ENCODE measurements at regions of chr15 and their contacts with region 1.

Region 1: DNA sequence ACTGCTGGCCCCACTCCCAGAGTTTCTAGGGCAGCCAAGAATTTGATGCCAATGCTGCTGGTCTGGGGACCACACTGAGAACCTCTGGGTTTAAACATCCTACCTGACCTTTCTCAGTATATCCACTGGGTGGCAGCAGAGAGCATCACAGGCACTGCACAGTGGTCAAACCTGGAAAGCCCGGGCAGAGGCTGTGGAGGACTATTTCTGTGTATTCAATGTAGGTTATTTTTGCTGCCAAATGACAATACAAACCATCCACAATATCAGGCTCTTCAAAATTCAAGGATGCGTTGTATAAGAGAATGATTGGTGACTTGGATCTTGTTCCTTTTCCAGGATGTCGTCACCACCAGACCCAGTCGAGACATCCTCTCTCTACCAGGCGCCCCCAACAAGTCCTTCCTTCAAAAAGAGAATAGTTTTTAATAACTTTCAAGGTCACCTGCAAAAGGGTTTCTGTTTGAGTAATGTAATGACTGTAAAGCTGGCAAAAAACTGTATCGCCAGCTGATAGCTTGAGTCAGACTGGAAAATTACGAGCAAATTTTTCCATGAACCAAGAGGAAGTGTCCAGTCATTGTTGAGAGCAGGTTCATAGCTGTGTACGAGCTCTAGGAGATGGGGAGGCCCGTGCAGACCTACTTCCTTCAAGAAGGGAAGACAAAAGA is 30.5 kb upstream of the MYZAP start:
- DNase-seq: peak; percentile 36
- H3K4me3 Mint-ChIP-seq: no peak overlapping the region
- H3K27ac Mint-ChIP-seq: peak overlapping the region; percentile 86
- H3K4me1 Mint-ChIP-seq: peaks cover 28% of the 10 kb centered on the region
- H3K27me3 Mint-ChIP-seq: peaks cover 1% of the 10 kb centered on the region

Region 2: DNA sequence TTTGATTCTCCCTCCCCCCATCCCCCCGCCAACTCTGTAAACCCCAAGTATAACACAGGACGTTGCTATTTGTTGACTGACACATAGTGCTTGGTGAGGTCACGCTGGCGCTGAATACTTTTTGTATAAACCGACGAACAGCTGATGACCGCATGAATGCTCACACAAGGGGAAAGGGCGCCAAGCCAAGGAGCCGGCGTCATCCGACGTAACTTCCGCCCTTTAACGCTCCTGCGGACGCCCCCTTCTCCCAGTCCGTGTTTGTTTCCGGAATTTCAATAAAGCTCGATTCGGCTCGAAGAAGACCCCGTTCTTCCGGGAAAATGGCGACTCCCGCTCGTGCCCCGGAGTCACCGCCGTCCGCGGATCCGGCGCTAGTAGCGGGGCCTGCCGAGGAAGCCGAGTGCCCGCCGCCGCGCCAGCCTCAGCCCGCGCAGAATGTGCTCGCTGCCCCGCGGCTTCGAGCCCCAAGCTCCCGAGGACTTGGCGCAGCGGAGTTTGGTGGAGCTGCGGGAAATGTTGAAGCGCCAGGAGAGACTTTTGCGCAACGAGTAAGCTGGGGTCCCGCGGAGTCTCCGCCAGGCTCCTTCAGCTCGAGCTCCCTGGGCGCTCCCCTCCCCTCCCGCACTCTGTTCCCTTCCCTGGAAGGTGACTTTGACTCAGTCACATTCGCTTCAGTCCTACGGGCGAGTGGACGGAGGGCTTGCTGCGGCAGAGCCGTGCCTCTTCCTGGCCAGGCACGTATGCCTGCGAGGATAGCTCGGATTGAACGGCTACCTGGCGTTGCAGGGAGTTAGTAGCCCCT is 145.4 kb after region 1 on chr15 and contains the start of gene POLR2M:
- intact Hi-C with region 1: loop called (anchors 2 kb)
- DNase-seq: peak; percentile 88
- H3K4me3 Mint-ChIP-seq: peak within 1 kb of the TSS; percentile 89
- H3K27ac Mint-ChIP-seq: peak within 1 kb of the TSS; percentile 89
- H3K4me1 Mint-ChIP-seq: peaks cover 55% of the 10 kb centered on the region
- H3K27me3 Mint-ChIP-seq: peaks cover 5% of the 10 kb centered on the region
- total RNA-seq, gene POLR2M: 45.2 and 59.3 TPM in 2 replicates

Region 3: GRCh38 chr15:57849317-57849716 is 288.1 kb after region 1 on chr15:
- intact Hi-C with region 1: no loop called
- DNase-seq: no peak
- H3K4me3 Mint-ChIP-seq: no peak overlapping the region
- H3K27ac Mint-ChIP-seq: no peak overlapping the region
- H3K4me1 Mint-ChIP-seq: no peaks in the 10 kb centered on the region
- H3K27me3 Mint-ChIP-seq: peaks cover 33% of the 10 kb centered on the region

Region 4: GRCh38 chr15:57861036-57861638 is 300.0 kb after region 1 on chr15:
- intact Hi-C with region 1: loop called (anchors 2 kb)
- DNase-seq: no peak
- H3K4me3 Mint-ChIP-seq: no peak overlapping the region
- H3K27ac Mint-ChIP-seq: no peak overlapping the region
- H3K4me1 Mint-ChIP-seq: peaks cover 6% of the 10 kb centered on the region
- H3K27me3 Mint-ChIP-seq: peaks cover 46% of the 10 kb centered on the region

Region 5: DNA sequence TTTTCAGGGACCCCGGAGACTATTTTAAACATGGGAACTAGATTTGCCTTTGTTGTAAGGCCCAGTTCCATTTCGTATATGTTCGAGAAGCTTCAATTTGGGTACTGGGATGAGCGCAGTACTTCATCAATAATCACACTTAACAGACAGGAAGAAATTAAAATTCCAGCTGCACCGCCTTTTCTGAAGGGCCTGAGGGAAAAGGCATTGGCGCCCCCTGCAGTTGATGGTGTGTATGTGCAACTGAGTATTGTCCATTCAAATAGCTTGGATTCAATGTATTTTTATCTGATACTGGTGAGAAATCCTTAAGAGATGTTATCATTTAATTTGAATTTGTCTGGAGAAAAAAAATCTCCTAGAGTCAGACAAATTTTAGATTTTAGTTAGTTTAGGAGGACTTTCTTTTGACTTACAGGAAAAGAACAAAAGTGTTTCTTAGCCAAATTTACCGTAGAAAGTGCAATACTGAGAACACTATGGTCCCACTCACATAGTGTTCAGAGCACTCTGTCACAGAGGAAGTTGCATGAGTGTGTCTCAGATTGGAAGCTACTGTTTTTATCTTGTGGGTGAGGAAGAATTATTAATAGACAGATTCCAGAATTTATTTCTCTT is 509.7 kb after region 1 on chr15:
- intact Hi-C with region 1: loop called (anchors 2 kb)
- DNase-seq: no peak
- H3K4me3 Mint-ChIP-seq: no peak overlapping the region
- H3K27ac Mint-ChIP-seq: no peak overlapping the region
- H3K4me1 Mint-ChIP-seq: peaks cover 3% of the 10 kb centered on the region
- H3K27me3 Mint-ChIP-seq: peaks cover 45% of the 10 kb centered on the region

Region 6: DNA sequence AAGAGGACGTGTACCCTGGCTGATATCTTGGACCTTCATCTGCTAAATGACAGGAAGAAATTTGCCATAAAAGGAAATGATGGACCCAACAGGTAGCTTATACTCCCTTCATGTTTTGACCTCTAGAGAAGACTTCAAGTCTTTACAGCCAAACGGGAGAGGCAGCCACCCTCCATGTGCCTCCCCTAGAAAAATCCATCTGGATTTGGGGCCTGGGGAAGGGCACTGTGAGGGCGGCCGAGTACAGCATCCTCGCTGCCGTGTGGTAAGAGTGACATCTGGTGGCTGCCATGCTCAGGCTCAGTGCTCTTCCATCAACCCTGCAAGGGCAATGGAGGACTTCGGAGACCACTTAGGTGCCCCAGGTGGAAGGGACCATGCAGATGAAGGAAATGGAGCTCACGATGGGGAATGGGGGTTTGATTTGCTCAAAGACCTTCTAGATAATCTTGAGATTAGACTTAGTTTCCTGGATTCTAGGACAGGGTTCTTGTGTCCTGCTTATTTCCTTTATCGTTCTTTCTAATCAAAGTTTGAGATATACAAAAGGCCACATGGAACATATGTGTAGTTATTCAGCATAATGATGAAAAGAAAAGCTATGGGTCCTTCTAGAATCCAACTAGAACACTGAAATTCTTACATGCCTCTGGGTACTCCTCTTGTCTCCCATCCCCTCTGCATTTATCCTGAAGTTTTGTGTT is 621.4 kb after region 1 on chr15:
- intact Hi-C with region 1: loop called (anchors 2 kb)
- DNase-seq: peak; percentile 10
- H3K4me3 Mint-ChIP-seq: no peak overlapping the region
- H3K27ac Mint-ChIP-seq: no peak overlapping the region
- H3K4me1 Mint-ChIP-seq: peaks cover 8% of the 10 kb centered on the region
- H3K27me3 Mint-ChIP-seq: peaks cover 22% of the 10 kb centered on the region